ENCODE measurements at regions of chr12 and their contacts with region 1.

Region 1: DNA sequence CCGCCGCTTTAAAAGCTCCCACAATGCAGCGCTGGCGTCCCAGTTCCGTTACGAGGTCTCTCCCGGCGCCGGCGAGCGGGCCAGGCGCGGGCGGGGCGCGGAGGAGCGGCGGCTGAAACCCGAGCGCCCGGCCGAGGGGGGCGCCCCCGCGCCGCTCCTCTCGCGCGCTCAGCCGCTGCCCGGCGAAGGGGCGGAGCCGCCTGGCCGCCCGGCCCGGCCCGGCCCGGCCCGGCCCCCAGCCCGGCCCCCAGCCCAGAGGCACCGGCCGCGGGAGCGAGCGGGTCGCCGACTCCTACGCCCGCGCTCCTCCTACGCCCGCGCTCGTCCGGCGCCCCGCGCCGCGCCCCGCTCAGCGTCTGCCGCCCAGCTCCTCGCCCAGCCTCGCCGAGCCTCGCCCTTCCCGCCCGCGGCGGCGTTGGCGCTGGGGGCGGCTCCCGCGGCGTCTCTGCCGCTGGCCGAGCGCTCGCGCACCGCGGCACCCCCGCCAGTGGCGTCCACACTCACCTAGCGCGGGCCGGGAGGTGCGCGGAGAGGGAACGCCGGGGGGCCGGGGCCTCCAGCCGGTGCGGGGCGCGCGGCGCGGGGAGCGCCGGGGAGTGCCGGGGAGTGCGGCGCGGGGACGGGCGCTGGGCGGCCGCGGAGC is at the start of gene RASSF8:
- DNase-seq: peak; percentile 67
- H3K4me3 ChIP-seq: peak within 1 kb of the TSS; percentile 88 to 100 (median 88)
- H3K27ac ChIP-seq: peak within 1 kb of the TSS; percentile 94
- H3K4me1 ChIP-seq: peaks cover 6% of the 10 kb centered on the region
- H3K27me3 ChIP-seq: no peaks in the 10 kb centered on the region
- CTCF ChIP-seq: no peak
- total RNA-seq, gene RASSF8: 31.3 to 35.3 TPM

Region 2: DNA sequence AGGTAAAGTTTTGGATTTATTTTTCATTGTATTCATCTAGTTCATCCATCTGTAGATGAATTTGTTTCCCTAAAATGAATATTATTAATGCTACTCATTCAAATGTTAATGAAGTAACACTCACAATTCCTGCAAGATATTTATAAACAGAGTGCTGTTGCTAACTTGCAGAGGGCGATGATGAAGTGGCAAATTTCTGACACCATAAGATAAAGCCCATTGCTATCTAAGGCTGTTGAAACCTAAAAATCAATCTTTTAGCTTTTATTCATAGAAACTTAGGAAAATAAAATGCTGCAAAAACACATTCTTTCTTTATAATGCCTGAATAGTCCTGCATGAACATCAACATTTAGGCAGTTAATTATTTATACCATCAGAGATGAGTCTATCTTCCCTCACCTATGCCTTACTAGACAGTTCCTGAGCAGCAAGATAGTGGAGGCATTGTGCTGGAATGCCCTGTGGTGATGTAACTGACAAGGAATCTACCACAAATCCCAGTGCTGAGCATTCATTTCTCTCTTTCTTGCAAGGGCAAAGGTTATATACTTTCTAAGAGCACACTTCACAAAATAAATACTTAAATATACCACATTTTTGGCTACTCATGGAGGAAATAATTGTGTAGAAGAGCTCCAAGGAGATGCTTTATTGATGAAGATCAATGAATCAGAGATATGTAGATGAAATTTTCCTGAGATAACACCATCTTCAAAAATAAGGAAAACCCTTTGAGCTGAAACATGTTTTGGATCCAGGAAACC is 463.0 kb before region 1 on chr12:
- CTCF ChIA-PET with region 1: no interaction called
- dilution Hi-C with region 1: no loop called
- in situ Hi-C with region 1: no loop called
- intact Hi-C with region 1: loop called (anchors 5 kb)
- DNase-seq: peak; percentile 85
- H3K4me3 ChIP-seq: no peak overlapping the region
- H3K27ac ChIP-seq: peak overlapping the region; percentile 74
- H3K4me1 ChIP-seq: peaks cover 22% of the 10 kb centered on the region
- H3K27me3 ChIP-seq: no peaks in the 10 kb centered on the region
- CTCF ChIP-seq: no peak

Region 3: DNA sequence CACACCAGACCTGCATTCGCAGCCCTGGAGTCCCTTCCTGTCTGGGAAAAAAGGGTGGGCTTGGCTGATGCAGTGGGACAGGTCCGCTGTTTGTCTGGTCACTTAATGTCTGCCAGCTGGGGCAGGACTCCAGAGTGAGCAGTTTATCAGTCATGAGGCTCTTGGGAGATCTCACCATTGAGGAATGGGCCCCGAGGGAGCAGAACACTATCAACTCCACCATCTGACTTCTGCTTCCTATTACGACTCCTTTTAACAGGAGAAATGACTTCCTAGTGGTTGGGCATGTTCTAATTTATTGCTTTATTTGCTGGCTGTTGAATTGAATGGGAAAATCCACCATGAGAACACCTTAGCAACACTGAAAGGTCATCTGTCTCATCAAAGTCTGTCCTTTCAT is 182.6 kb before region 1 on chr12:
- CTCF ChIA-PET with region 1: no interaction called
- dilution Hi-C with region 1: no loop called
- in situ Hi-C with region 1: no loop called
- intact Hi-C with region 1: loop called (anchors 2 kb)
- DNase-seq: peak; percentile 87
- H3K4me3 ChIP-seq: no peak overlapping the region
- H3K27ac ChIP-seq: no peak overlapping the region
- H3K4me1 ChIP-seq: peaks cover 7% of the 10 kb centered on the region
- H3K27me3 ChIP-seq: no peaks in the 10 kb centered on the region
- CTCF ChIP-seq: no peak

Region 4: DNA sequence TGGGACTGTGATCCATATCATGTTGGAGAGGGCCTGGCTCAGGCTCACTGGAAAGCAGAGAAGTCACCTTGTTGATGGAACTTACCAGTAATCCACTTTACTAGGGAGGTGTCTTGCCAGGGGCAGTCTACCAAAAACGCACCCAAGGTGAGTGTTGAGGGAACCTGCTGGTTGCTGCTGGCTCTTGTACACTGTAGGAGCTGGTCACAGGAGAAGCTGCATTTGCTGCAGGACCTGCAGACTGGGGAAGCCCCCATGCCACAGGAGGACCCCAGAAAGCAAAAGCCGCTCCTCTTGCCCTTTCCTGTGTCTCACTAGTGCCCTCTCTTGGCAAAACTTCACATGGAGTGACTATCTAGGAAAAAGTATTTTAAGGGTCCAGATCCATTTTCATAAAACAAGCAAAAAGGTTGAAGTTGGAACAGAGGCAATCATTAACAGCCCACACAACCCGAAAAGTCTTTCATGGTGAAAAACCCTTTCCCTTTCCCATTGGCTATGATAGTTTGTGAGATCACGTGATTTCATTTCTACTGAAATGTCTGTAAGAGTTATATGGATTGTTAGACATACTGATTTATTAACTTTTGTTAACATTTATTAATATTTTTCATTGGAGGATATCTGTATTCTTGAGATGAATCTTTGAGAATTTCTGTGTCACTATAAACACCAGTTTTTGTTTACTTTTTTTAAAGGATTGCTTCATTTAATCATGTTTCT is 59.1 kb after region 1 on chr12:
- CTCF ChIA-PET with region 1: no interaction called
- dilution Hi-C with region 1: no loop called
- in situ Hi-C with region 1: no loop called
- intact Hi-C with region 1: loop called (anchors 2 kb)
- DNase-seq: peak; percentile 26
- H3K4me3 ChIP-seq: no peak overlapping the region
- H3K27ac ChIP-seq: no peak overlapping the region
- H3K4me1 ChIP-seq: peaks cover 2% of the 10 kb centered on the region
- H3K27me3 ChIP-seq: no peaks in the 10 kb centered on the region
- CTCF ChIP-seq: peak; percentile 55 to 68